ENCODE measurements at regions of chr2 and their contacts with region 1.

Region 1: GRCh38 chr2:183592271-183592785 is 468.1 kb downstream of the NUP35 start:
- DNase-seq: no peak
- ATAC-seq: no peak
- H3K4me3 ChIP-seq: no peak overlapping the region
- H3K27ac ChIP-seq: no peak overlapping the region
- H3K4me1 ChIP-seq: no peaks in the 10 kb centered on the region; the same call in 1 of the 2 replicates
- H3K27me3 ChIP-seq: no peaks in the 10 kb centered on the region
- CTCF ChIP-seq: no peak

Region 2: DNA sequence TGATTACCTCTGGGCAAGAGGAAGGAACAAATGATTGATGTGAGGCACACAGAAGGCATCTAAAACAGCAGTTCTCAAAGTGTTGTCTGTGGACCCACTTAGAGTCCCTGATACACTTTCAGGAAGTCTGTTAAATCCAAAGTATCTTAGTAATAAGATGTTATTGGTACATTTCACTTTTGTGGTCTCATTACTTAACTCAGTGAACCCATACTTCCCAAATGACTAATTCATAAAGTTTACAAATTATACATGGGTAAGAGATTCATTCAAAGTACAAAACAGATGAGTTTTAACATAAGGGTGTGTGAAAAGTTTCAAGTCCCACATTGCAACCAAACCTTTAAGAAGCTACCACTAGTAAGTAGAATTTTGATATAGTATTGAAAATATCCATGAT is 27.6 kb before region 1 on chr2:
- CTCF ChIA-PET with region 1: no interaction called
- POLR2A ChIA-PET with region 1: no interaction called
- intact Hi-C with region 1: no loop called
- DNase-seq: peak; percentile 20
- ATAC-seq: peak; percentile 42; the same call in 1 of the 2 replicates
- H3K4me3 ChIP-seq: no peak overlapping the region
- H3K27ac ChIP-seq: no peak overlapping the region
- H3K4me1 ChIP-seq: 0 out of 2 replicates have a peak, but pooled peaks cover 3% of the 10 kb centered on the region
- H3K27me3 ChIP-seq: no peaks in the 10 kb centered on the region
- CTCF ChIP-seq: no peak

Region 3: DNA sequence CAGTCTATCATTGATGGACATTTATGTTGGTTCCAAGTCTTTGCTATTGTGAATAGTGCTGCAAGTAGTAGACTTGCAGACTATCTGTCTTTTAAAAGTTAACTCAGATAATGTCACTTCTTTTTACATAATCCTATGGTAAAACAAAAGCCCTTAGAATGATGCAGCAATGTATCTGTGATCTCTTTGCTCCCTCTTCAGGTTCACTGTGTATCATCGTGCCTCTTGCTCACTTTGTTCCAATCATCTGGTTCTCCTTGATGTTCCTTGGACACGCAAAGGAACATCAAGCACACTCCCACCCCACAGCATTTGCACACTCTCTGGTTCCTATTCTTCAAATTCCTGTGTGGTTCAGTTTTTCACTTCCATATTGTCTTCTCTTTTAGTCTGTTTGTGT is 533.5 kb after region 1 on chr2:
- CTCF ChIA-PET with region 1: no interaction called
- POLR2A ChIA-PET with region 1: no interaction called
- intact Hi-C with region 1: loop called (anchors 5 kb)
- DNase-seq: peak; percentile 26
- ATAC-seq: peak; percentile 53; the same call in 1 of the 2 replicates
- H3K4me3 ChIP-seq: no peak overlapping the region
- H3K27ac ChIP-seq: no peak overlapping the region
- H3K4me1 ChIP-seq: no peaks in the 10 kb centered on the region
- H3K27me3 ChIP-seq: no peaks in the 10 kb centered on the region
- CTCF ChIP-seq: peak; percentile 47